ENCODE measurements at regions of chr19 and their contacts with region 1.

Region 1: DNA sequence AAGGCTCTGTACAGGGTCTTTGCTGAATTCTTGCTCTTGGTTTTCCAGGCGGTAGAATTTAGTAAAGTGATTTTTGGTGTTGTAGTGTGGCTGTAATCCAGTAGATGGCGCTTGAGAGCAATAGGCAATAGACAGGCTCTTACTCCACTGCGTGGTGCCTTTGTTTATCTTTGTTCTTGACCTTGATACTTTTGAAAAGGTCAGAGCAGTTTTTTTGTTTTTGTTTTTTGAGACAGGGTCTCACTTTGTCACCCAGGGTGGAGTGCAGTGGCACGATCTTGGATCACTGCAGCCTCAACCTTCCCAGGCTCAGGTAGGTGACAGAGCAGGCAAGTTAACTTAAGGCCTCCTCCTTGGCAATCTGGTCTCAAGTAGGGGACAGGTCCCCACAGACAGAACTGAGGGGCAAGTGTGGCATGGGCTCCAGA is 12.2 kb upstream of the LILRA5 start:
- DNase-seq: no peak
- ATAC-seq: peak; percentile 69
- H3K4me3 Mint-ChIP-seq: peak overlapping the region; percentile 32
- H3K27ac Mint-ChIP-seq: peak overlapping the region; percentile 56
- H3K4me1 Mint-ChIP-seq: peaks cover 54% of the 10 kb centered on the region
- H3K27me3 Mint-ChIP-seq: no peaks in the 10 kb centered on the region
- CTCF ChIP-seq: peak; percentile 84

Region 2: GRCh38 chr19:53612755-53613154 is 712.5 kb before region 1 on chr19:
- CTCF ChIA-PET with region 1: no interaction called
- POLR2A ChIA-PET with region 1: no interaction called
- intact Hi-C with region 1: no loop called
- DNase-seq: no peak
- ATAC-seq: no peak
- H3K4me3 Mint-ChIP-seq: no peak overlapping the region
- H3K27ac Mint-ChIP-seq: no peak overlapping the region
- H3K4me1 Mint-ChIP-seq: no peaks in the 10 kb centered on the region
- H3K27me3 Mint-ChIP-seq: no peaks in the 10 kb centered on the region
- CTCF ChIP-seq: no peak

Region 3: DNA sequence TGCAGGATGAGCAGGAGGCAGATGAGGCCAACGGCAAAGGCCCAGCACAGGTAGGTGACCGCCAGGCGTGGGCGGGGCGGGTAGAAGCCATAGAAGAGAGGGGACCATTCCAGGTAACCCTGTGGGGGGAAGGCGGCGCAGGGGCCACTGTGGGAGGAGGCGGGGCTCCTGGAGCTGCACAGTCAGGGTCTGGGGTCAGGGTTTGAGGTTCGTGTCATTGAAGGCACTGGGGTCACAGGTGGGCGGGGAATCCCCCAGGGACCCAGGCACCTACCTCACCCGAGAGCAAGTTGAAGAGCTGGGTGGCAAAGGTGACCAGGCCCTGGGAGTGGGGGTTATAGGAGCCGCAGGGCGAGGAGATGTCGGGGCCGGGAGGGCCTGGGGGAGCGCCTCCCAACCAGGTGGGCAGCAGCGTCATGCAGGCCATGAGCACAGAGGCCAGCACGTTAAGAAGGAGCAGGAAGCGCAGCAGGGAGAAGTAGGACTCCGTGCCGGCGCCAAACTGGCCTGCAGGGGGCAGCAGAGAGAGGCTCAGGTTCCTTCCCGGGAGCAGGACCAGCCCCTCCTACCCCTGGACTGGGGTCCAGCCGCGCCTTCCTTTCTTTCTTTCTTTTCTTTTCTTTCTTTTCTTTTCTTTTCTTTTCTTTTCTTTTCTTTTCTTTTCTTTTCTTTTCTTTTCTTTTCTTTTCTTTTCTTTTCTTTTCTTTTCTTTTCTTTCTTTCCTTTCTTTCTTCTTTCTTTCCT is 156.9 kb before region 1 on chr19:
- CTCF ChIA-PET with region 1: interaction called, 3 read pairs
- POLR2A ChIA-PET with region 1: interaction called, 4 read pairs
- intact Hi-C with region 1: loop called (anchors 1 kb)
- DNase-seq: peak; percentile 85
- ATAC-seq: peak; percentile 89
- H3K4me3 Mint-ChIP-seq: no peak overlapping the region
- H3K27ac Mint-ChIP-seq: no peak overlapping the region
- H3K4me1 Mint-ChIP-seq: peaks cover 24% of the 10 kb centered on the region
- H3K27me3 Mint-ChIP-seq: peaks cover 17% of the 10 kb centered on the region
- CTCF ChIP-seq: peak; percentile 71

Region 4: GRCh38 chr19:54231077-54231931 is 93.9 kb before region 1 on chr19:
- CTCF ChIA-PET with region 1: no interaction called
- POLR2A ChIA-PET with region 1: no interaction called
- intact Hi-C with region 1: no loop called
- DNase-seq: peak; percentile 73
- ATAC-seq: peak; percentile 96
- H3K4me3 Mint-ChIP-seq: no peak overlapping the region
- H3K27ac Mint-ChIP-seq: no peak overlapping the region
- H3K4me1 Mint-ChIP-seq: peaks cover 6% of the 10 kb centered on the region
- H3K27me3 Mint-ChIP-seq: peaks cover 44% of the 10 kb centered on the region
- CTCF ChIP-seq: no peak

Region 5: GRCh38 chr19:54339646-54340358 is 14.6 kb after region 1 on chr19:
- CTCF ChIA-PET with region 1: interaction called, 7 read pairs
- POLR2A ChIA-PET with region 1: interaction called, 21 read pairs
- intact Hi-C with region 1: loop called (anchors 1 kb)
- DNase-seq: peak; percentile 56
- ATAC-seq: peak; percentile 86
- H3K4me3 Mint-ChIP-seq: peak overlapping the region; percentile 66
- H3K27ac Mint-ChIP-seq: peak overlapping the region; percentile 89
- H3K4me1 Mint-ChIP-seq: peaks cover 84% of the 10 kb centered on the region
- H3K27me3 Mint-ChIP-seq: no peaks in the 10 kb centered on the region
- CTCF ChIP-seq: no peak

Region 6: GRCh38 chr19:54345938-54346386 is 20.8 kb after region 1 on chr19:
- CTCF ChIA-PET with region 1: interaction called, 82 read pairs
- POLR2A ChIA-PET with region 1: interaction called, 21 read pairs
- intact Hi-C with region 1: no loop called
- DNase-seq: peak; percentile 42
- ATAC-seq: peak; percentile 94
- H3K4me3 Mint-ChIP-seq: peak overlapping the region; percentile 81
- H3K27ac Mint-ChIP-seq: peak overlapping the region; percentile 91
- H3K4me1 Mint-ChIP-seq: peaks cover 89% of the 10 kb centered on the region
- H3K27me3 Mint-ChIP-seq: peaks cover 4% of the 10 kb centered on the region
- CTCF ChIP-seq: no peak

Region 7: GRCh38 chr19:54352041-54352440 is 26.8 kb after region 1 on chr19:
- CTCF ChIA-PET with region 1: interaction called, 82 read pairs
- POLR2A ChIA-PET with region 1: interaction called, 6 read pairs
- intact Hi-C with region 1: loop called (anchors 1 kb)
- DNase-seq: no peak
- ATAC-seq: peak; percentile 78
- H3K4me3 Mint-ChIP-seq: peak overlapping the region; percentile 36
- H3K27ac Mint-ChIP-seq: peak overlapping the region; percentile 83
- H3K4me1 Mint-ChIP-seq: peaks cover 62% of the 10 kb centered on the region
- H3K27me3 Mint-ChIP-seq: peaks cover 4% of the 10 kb centered on the region
- CTCF ChIP-seq: no peak

Region 8: DNA sequence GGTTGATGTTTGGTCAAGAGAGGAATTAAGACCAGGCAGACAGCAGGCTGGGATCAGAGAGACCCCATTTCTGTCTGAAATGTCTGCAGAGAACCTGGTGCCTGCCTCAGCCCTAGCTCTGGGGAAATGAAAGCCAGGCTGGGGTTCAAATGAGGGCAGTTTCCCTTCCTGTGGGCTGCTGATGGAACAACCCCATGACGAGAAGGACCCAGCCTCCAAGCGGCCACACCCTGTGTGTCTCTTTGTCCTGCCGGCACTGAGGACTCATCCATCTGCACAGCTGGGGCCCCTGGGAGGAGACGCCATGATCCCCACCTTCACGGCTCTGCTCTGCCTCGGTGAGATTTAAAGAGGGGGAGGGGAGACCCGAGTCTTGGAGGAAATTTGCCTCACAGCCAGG is 337.5 kb after region 1 on chr19 and contains the start of gene LILRB4:
- CTCF ChIA-PET with region 1: no interaction called
- POLR2A ChIA-PET with region 1: no interaction called
- intact Hi-C with region 1: no loop called
- DNase-seq: no peak
- ATAC-seq: peak; percentile 40
- H3K4me3 Mint-ChIP-seq: peak within 1 kb of the TSS; percentile 56
- H3K27ac Mint-ChIP-seq: peak within 1 kb of the TSS; percentile 19
- H3K4me1 Mint-ChIP-seq: peaks cover 32% of the 10 kb centered on the region
- H3K27me3 Mint-ChIP-seq: peaks cover 9% of the 10 kb centered on the region
- CTCF ChIP-seq: no peak
- total RNA-seq, gene LILRB4: 0.76 and 1.4 TPM in 2 replicates

Measured in activated B cell treated with CpG ODN at 0.5 μM for 24 hours (primary cell).